ENCODE measurements at regions of chr6 and their contacts with region 1.

Region 1: GRCh38 chr6:39302669-39303424 is 11.4 kb downstream of the KCNK17 start:
- DNase-seq: peak; percentile 84 to 88
- H3K4me3 ChIP-seq: no peak overlapping the region
- H3K4me3 Mint-ChIP-seq: peak overlapping the region; percentile 57
- H3K27ac Mint-ChIP-seq: no peak overlapping the region
- H3K4me1 ChIP-seq: peaks cover 17% of the 10 kb centered on the region
- H3K4me1 Mint-ChIP-seq: peaks cover 10% of the 10 kb centered on the region
- H3K27me3 ChIP-seq: no peaks in the 10 kb centered on the region
- H3K27me3 Mint-ChIP-seq: no peaks in the 10 kb centered on the region
- CTCF ChIP-seq: peak; percentile 87 to 90

Region 2: DNA sequence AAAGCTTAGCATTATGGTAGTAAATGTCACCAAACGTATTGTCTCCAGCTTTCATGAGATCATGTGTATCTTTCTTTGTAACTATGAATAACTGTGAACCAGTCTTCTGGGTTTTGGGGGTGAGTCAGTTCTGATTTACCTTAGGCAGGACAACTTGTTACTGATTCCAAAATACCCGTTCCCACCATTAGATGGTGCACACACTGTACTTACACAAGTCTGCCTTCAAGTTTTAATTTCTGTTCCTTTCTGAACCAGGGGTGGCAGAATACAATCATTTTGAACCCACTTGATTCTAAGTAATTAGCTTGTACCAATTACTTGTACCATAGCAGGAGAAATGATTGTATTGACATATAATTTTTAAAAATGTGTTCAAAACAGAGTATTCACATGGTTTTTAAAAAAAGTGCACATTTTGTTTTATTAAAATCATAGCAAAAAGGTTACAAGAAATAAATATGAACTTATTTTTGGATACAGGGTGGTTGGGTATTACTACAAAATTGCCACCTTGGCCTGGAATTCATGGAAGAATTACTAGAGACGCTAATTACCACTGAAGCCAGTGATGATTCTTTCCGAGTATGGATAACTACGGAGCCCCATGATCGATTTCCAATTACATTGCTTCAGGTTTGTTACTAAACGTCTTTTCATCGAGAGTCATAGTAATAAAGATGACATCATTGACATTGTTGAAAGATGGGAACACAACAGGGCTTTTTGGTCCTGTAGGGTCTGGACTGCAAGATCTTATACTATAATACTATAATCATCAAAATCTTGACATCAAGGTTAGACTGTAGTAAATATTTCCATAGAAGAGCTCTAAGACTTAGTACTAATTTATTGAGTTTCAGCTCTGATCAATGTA is 329.4 kb before region 1 on chr6:
- CTCF ChIA-PET with region 1: no interaction called
- POLR2A ChIA-PET with region 1: no interaction called
- intact Hi-C with region 1: loop called (anchors 2 kb)
- DNase-seq: peak in 1 of 2 experiments; percentile 68
- H3K4me3 ChIP-seq: no peak overlapping the region
- H3K4me3 Mint-ChIP-seq: no peak overlapping the region
- H3K27ac Mint-ChIP-seq: no peak overlapping the region
- H3K4me1 ChIP-seq: peaks cover 36% of the 10 kb centered on the region
- H3K4me1 Mint-ChIP-seq: peaks cover 32% of the 10 kb centered on the region
- H3K27me3 ChIP-seq: no peaks in the 10 kb centered on the region
- H3K27me3 Mint-ChIP-seq: peaks cover 5% of the 10 kb centered on the region
- CTCF ChIP-seq: peak; percentile 75 to 82

Region 3: GRCh38 chr6:39088331-39088730 is 214.5 kb before region 1 on chr6:
- CTCF ChIA-PET with region 1: no interaction called
- POLR2A ChIA-PET with region 1: no interaction called
- intact Hi-C with region 1: loop called (anchors 2 kb)
- DNase-seq: peak; percentile 62 to 70
- H3K4me3 ChIP-seq: no peak overlapping the region
- H3K4me3 Mint-ChIP-seq: no peak overlapping the region
- H3K27ac Mint-ChIP-seq: no peak overlapping the region
- H3K4me1 ChIP-seq: no peaks in the 10 kb centered on the region
- H3K4me1 Mint-ChIP-seq: no peaks in the 10 kb centered on the region
- H3K27me3 ChIP-seq: no peaks in the 10 kb centered on the region; the same call in 1 of the 2 replicates
- H3K27me3 Mint-ChIP-seq: no peaks in the 10 kb centered on the region
- CTCF ChIP-seq: peak; percentile 40 to 54

Region 4: GRCh38 chr6:39189915-39190544 is 112.8 kb before region 1 on chr6:
- CTCF ChIA-PET with region 1: interaction called, 22 read pairs
- POLR2A ChIA-PET with region 1: no interaction called
- intact Hi-C with region 1: loop called (anchors 1 kb)
- DNase-seq: peak; percentile 67
- H3K4me3 ChIP-seq: no peak overlapping the region
- H3K4me3 Mint-ChIP-seq: no peak overlapping the region
- H3K27ac Mint-ChIP-seq: peak overlapping the region; percentile 25
- H3K4me1 ChIP-seq: peaks cover 10% of the 10 kb centered on the region
- H3K4me1 Mint-ChIP-seq: peaks cover 37% of the 10 kb centered on the region
- H3K27me3 ChIP-seq: no peaks in the 10 kb centered on the region
- H3K27me3 Mint-ChIP-seq: no peaks in the 10 kb centered on the region
- CTCF ChIP-seq: peak; percentile 42 to 73

Region 5: DNA sequence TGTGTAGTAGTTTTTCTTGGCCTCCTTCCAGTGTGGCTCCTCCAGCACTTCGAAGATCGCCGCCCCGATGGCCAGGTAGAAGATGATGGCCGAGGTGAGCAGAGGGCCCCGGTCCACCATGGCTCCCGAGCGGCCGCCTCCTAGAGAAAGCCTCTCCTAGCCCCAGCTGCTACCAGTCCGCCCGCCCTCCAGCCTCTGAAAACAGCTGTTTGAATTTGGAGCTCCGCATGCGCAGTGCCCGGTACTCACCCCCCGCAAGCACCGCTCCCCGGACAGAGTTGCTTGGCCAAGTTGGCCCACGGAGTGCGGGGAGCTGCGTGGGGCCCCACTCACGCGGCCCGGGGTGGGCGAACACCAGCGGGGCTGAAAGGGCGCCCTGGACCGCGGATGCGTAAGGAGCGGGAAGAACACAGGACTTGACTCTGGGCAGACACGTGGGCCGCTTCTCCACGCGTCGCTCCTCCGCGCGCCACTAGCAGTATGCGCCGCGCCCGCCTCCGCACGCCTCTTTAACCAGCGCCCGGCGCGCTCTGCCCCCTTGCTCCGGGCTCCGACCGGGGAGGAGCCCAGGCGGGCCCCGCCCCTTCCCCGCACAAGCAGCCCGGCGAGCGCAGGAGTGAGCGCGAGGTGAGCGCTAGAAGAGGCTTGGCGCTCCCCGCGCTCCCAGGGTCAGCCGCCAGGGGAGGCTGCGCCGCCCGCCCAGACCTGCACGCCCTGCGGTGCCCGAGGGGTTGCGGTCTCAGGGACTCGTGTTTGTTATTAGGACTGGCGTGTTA is 73.7 kb before region 1 on chr6 and contains the start of gene KCNK5:
- CTCF ChIA-PET with region 1: no interaction called
- POLR2A ChIA-PET with region 1: no interaction called
- intact Hi-C with region 1: loop called (anchors 1 kb)
- DNase-seq: peak; percentile 86 to 90
- H3K4me3 ChIP-seq: peak within 1 kb of the TSS; percentile 90
- H3K4me3 Mint-ChIP-seq: peak within 1 kb of the TSS; percentile 83
- H3K27ac Mint-ChIP-seq: peak within 1 kb of the TSS; percentile 50
- H3K4me1 ChIP-seq: peaks cover 32% of the 10 kb centered on the region
- H3K4me1 Mint-ChIP-seq: peaks cover 33% of the 10 kb centered on the region
- H3K27me3 ChIP-seq: no peaks in the 10 kb centered on the region
- H3K27me3 Mint-ChIP-seq: no peaks in the 10 kb centered on the region
- CTCF ChIP-seq: peak; percentile 73 to 80
- total RNA-seq, gene KCNK5: 19.8 and 20.9 TPM in 2 replicates

Region 6: DNA sequence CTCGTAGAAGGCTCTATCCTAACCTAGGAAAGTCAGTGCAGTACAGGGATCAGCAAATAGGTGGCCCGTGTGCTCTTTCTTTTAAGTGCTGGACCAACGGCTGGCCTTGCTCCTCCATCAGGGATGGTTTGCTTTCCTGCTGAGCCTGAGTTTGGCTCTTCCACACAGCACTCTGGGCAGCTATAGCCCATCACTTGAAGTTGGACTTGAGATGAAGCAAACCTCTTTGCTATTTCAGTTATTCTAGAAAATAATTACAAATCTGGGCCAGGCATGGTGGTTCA is 86.6 kb after region 1 on chr6:
- CTCF ChIA-PET with region 1: no interaction called
- POLR2A ChIA-PET with region 1: no interaction called
- intact Hi-C with region 1: no loop called
- DNase-seq: no peak
- H3K4me3 ChIP-seq: no peak overlapping the region
- H3K4me3 Mint-ChIP-seq: no peak overlapping the region
- H3K27ac Mint-ChIP-seq: no peak overlapping the region
- H3K4me1 ChIP-seq: no peaks in the 10 kb centered on the region
- H3K4me1 Mint-ChIP-seq: no peaks in the 10 kb centered on the region
- H3K27me3 ChIP-seq: no peaks in the 10 kb centered on the region
- H3K27me3 Mint-ChIP-seq: peaks cover 26% of the 10 kb centered on the region
- CTCF ChIP-seq: no peak

Region 7: DNA sequence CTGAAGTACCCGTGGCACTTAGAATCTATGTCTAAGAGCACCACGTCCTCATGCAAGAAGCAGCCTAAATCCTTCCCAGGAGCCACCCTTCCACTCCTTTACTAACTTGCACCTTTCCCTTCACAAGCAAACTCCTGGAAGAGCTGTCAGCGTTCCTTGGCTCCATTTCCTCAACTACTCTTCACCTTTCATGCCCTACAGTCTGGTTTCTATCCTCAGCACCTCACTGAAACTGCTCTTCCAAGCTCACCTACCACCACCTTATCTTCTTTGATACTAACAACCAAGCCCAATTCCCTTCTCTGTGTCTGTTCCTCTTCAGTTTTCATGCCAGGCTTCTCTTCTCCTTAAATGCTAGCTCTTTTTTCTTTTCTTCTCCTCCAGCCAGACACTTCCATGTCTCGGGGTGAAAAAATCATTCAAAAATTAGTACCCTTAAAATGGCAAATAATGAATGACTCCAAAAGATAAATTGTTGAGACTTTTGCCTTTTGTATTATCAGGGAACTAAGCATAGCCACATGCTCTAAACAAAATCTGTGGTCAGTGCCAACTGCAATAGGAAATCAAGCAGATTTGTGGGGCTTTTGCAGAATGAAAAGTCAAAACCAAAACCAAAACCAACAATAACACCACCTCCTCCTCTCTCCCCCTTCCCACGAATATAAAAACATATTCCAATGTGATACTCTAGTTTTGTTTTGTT is 169.3 kb after region 1 on chr6:
- CTCF ChIA-PET with region 1: no interaction called
- POLR2A ChIA-PET with region 1: no interaction called
- intact Hi-C with region 1: no loop called
- DNase-seq: no peak
- H3K4me3 ChIP-seq: no peak overlapping the region
- H3K4me3 Mint-ChIP-seq: no peak overlapping the region
- H3K27ac Mint-ChIP-seq: no peak overlapping the region
- H3K4me1 ChIP-seq: no peaks in the 10 kb centered on the region
- H3K4me1 Mint-ChIP-seq: peaks cover 6% of the 10 kb centered on the region
- H3K27me3 ChIP-seq: no peaks in the 10 kb centered on the region
- H3K27me3 Mint-ChIP-seq: peaks cover 19% of the 10 kb centered on the region
- CTCF ChIP-seq: no peak

Region 8: GRCh38 chr6:39669207-39669972 is 366.5 kb after region 1 on chr6:
- CTCF ChIA-PET with region 1: no interaction called
- POLR2A ChIA-PET with region 1: no interaction called
- intact Hi-C with region 1: no loop called
- DNase-seq: no peak
- H3K4me3 ChIP-seq: no peak overlapping the region
- H3K4me3 Mint-ChIP-seq: no peak overlapping the region
- H3K27ac Mint-ChIP-seq: no peak overlapping the region
- H3K4me1 ChIP-seq: peaks cover 3% of the 10 kb centered on the region; the same call in 1 of the 2 replicates
- H3K4me1 Mint-ChIP-seq: peaks cover 9% of the 10 kb centered on the region
- H3K27me3 ChIP-seq: no peaks in the 10 kb centered on the region
- H3K27me3 Mint-ChIP-seq: peaks cover 5% of the 10 kb centered on the region
- CTCF ChIP-seq: no peak